Lower lobe of right lung (tissue), 2 donors: ENCODE measurements at regions of chr18 and their contacts with region 1.

Region 1: DNA sequence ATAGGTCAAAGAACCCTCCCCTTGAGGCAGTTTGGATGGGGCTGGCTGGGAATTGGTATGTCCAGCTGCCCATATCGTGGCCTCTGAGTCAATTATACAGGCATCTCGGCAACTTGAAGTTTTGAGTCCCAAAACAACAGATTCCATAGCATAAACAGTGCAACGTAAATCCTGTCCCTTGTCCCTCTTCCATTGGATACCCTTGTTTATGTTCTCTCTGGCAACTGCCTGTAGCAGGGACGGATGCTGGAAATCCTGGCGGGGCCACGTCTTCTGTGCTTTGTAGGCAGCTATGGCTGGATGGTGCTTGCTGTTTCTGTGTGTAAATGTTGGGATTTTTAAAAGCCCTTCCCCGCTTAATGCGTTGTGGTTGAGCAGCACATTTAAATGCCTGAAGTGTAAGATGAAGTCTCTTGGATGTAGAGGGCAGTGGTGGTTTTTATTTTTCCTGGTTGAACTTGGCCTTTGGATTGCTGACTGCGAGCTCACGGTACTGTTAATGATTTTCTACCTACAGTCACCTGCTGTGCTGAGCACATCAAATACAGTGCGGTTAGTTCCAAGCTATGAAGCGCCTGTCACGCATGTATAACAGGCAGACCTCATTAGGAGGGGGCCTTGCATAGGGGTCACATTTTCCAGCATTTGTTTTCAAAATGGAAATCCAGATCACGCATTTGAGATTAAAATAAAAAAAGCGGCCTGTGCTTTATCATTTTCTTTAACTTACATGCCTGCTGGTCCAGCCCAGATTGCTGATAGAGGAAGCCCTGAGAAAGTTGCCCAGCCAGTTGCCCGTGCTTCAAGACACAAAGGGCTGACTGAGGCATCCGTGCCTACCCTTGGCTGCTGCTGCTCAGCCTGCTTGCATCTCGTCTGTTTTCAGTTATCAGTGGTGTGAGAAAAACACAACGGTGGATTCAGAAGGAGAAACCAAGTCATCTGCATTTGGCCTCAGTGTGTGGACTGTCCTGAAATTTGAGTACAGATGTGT is 84.7 kb downstream of the NEDD4L start:
- DNase-seq: no peak
- ATAC-seq: peak in 1 of 2 donors; percentile 15
- H3K4me3 ChIP-seq: no peak overlapping the region
- H3K27ac ChIP-seq: no peak overlapping the region
- H3K4me1 ChIP-seq: no peaks in the 10 kb centered on the region
- H3K27me3 ChIP-seq: no peaks in the 10 kb centered on the region
- CTCF ChIP-seq: no peak

Region 2: DNA sequence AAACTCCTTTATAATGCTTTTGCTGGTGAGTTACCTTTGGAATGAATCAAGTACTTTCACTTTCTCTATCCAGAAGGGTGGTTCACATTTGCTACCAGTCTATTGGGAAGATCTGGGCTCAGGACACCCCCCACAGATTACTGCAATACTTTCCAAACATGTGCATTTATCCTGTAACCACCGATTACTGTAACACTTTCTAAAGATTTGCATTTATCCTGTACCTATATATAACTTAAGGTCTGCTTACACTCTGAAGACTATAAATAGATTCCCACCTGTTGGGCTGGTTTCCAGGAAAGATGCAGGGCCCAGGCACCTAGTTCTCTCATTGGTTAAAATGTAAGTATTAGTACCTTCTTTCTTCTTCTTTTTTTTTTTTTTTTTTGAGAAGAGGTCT is 197.6 kb before region 1 on chr18:
- intact Hi-C with region 1: no loop called
- DNase-seq: no peak
- ATAC-seq: no peak
- H3K4me3 ChIP-seq: peak overlapping the region; percentile 22
- H3K27ac ChIP-seq: no peak overlapping the region
- H3K4me1 ChIP-seq: peaks cover 6% of the 10 kb centered on the region
- H3K27me3 ChIP-seq: no peaks in the 10 kb centered on the region
- CTCF ChIP-seq: no peak

Region 3: DNA sequence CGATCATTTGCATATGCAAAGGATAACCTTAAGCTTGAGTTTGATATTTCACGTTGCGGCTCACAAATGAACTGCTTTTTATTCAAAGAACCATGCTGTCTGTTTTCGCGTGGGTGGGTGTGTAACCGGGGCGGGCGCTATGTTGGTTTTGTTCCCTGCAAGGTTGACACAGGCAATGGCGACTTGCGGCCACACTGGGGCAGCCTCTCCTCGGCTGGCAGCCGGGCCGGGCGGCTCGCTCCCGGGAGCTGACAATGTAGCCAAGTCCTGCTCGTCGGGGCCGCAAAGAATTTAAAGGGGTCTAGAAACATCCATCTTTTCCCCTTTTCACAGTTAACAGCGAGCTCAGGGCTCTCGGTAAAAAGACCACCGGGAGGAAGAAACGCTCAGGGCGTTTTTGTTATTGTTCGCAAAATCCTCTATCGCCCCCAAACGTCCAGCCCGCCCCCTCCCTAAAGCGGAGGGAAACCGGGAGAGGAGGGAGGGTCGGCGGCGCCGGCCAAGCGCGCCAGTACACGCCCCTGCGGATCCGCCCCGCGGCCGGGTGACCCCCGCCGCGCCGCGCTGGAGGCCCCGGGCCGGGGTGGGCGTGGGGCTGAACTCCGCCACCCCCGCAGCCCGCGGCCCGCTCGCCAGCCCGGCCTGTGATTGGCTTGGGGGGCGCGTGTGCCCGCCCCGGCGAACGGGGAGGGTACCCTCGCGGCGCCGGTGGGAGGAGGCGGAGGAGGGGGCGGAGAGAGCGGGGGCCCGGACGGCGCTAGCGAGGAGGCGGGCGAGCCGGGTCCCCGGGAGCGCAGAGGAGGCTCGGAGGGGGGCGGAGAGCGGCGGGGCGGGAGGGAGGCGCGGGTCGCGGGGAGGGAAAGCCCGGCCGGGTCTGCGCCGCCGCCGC is 84.9 kb before region 1 on chr18 and contains the start of gene NEDD4L:
- intact Hi-C with region 1: loop called (anchors 10 kb)
- DNase-seq: peak; percentile 89
- ATAC-seq: peak; percentile 85 to 90
- H3K4me3 ChIP-seq: peak within 1 kb of the TSS; percentile 93
- H3K27ac ChIP-seq: peak within 1 kb of the TSS; percentile 89
- H3K4me1 ChIP-seq: peaks cover 39% of the 10 kb centered on the region
- H3K27me3 ChIP-seq: no peaks in the 10 kb centered on the region
- CTCF ChIP-seq: peak; percentile 88
- total RNA-seq, gene NEDD4L: 203 TPM